ENCODE measurements at regions of chr7 and their contacts with region 1.

Region 1: DNA sequence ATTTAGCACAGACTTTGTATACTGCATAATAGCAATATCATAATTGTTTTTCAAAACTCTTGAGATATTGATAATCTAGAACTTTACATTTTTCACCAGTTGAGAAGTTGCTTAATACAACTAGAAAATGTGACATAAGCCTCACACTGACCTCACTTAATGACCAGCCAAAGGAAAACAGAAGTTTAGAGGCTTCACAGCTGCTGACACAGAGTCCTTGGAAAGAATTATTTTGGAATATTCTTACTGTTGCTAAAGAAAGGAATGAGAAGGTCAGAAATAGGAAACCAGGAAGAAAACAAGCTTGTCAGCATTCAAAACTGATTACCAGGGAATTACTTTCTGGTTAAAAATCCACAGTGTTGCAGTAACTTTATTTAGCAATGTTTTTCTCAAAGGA is 35.5 kb upstream of the WASL start:
- DNase-seq: no peak
- ATAC-seq: peak; percentile 37; the same call in 1 of the 2 replicates
- H3K4me3 ChIP-seq: no peak overlapping the region
- H3K27ac ChIP-seq: peak overlapping the region; percentile 59
- H3K4me1 ChIP-seq: peaks cover 28% of the 10 kb centered on the region
- H3K27me3 ChIP-seq: no peaks in the 10 kb centered on the region
- CTCF ChIP-seq: no peak

Region 2: GRCh38 chr7:123417580-123417979 is 366.7 kb before region 1 on chr7:
- CTCF ChIA-PET with region 1: no interaction called
- POLR2A ChIA-PET with region 1: no interaction called
- intact Hi-C with region 1: no loop called
- DNase-seq: no peak
- ATAC-seq: no peak
- H3K4me3 ChIP-seq: no peak overlapping the region
- H3K27ac ChIP-seq: no peak overlapping the region
- H3K4me1 ChIP-seq: no peaks in the 10 kb centered on the region
- H3K27me3 ChIP-seq: no peaks in the 10 kb centered on the region
- CTCF ChIP-seq: no peak

Region 3: GRCh38 chr7:123635551-123636359 is 148.5 kb before region 1 on chr7:
- CTCF ChIA-PET with region 1: no interaction called
- POLR2A ChIA-PET with region 1: no interaction called
- intact Hi-C with region 1: no loop called
- DNase-seq: peak; percentile 55
- ATAC-seq: peak; percentile 60
- H3K4me3 ChIP-seq: no peak overlapping the region
- H3K27ac ChIP-seq: no peak overlapping the region
- H3K4me1 ChIP-seq: peaks cover 15% of the 10 kb centered on the region
- H3K27me3 ChIP-seq: no peaks in the 10 kb centered on the region
- CTCF ChIP-seq: peak; percentile 76

Region 4: DNA sequence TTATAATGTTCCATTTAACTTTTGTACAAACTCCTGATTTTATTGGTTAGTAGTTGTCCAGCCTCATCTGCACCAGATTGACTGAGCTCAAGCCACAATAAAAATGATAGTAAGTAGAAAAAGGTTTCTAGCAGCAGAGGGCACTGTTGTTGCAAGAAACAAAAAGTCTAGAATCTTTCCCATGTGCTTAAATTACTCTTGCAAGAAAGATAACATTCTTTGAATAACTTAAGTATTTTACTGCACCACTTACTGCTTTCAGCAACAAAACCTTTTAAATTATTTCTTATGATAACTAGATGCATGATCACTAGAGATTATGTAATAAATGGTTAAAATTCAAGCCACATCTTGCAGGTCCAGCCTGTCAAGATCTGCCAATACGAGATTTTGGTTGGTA is 101.6 kb before region 1 on chr7:
- CTCF ChIA-PET with region 1: no interaction called
- POLR2A ChIA-PET with region 1: no interaction called
- intact Hi-C with region 1: loop called (anchors 5 kb)
- DNase-seq: peak; percentile 78
- ATAC-seq: peak; percentile 72
- H3K4me3 ChIP-seq: no peak overlapping the region
- H3K27ac ChIP-seq: no peak overlapping the region
- H3K4me1 ChIP-seq: no peaks in the 10 kb centered on the region
- H3K27me3 ChIP-seq: no peaks in the 10 kb centered on the region
- CTCF ChIP-seq: peak; percentile 65

Region 5: GRCh38 chr7:123727071-123727837 is 57.0 kb before region 1 on chr7:
- CTCF ChIA-PET with region 1: no interaction called
- POLR2A ChIA-PET with region 1: no interaction called
- intact Hi-C with region 1: loop called (anchors 2 kb)
- DNase-seq: peak; percentile 74
- ATAC-seq: peak; percentile 84
- H3K4me3 ChIP-seq: peak overlapping the region; percentile 13; the same call in 1 of the 2 replicates
- H3K27ac ChIP-seq: peak overlapping the region; percentile 13
- H3K4me1 ChIP-seq: peaks cover 23% of the 10 kb centered on the region
- H3K27me3 ChIP-seq: no peaks in the 10 kb centered on the region
- CTCF ChIP-seq: no peak

Region 6: GRCh38 chr7:123770378-123770777 is 13.9 kb before region 1 on chr7:
- CTCF ChIA-PET with region 1: no interaction called
- POLR2A ChIA-PET with region 1: no interaction called
- intact Hi-C with region 1: loop called (anchors 1 kb)
- DNase-seq: peak; percentile 89
- ATAC-seq: peak; percentile 73
- H3K4me3 ChIP-seq: peak overlapping the region; percentile 43
- H3K27ac ChIP-seq: peak overlapping the region; percentile 75
- H3K4me1 ChIP-seq: peaks cover 60% of the 10 kb centered on the region
- H3K27me3 ChIP-seq: no peaks in the 10 kb centered on the region
- CTCF ChIP-seq: no peak

Measured in PC-3 (cell line).